CD8-positive, alpha-beta T cell (primary cell): ENCODE measurements at regions of chr1 and their contacts with region 1.

Region 1: DNA sequence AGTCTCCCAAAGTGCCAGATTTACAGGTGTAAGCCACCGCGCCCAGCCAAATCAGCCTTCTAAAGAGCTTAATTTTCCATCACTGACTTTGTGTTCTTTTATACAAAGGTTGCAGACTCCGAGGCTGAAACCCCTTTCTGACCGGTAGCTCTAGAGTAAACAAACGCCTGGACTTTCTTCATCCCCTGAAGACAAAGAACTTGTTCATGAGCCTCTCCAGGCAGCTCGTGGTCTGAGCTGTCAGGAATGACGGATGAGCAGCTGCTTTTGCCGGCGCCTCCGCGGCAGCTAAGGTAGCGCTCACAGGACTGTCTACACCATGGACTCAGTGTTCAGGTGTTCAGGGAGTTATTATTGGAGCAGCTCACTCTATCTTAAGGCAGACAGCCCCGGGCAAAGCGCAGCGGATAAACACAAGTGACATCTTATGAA is 128.5 kb upstream of the ERRFI1 start:
- DNase-seq: no peak
- ATAC-seq: no peak
- H3K4me3 ChIP-seq: no peak overlapping the region
- H3K4me3 Mint-ChIP-seq: no peak overlapping the region
- H3K27ac ChIP-seq: no peak overlapping the region
- H3K27ac Mint-ChIP-seq: no peak overlapping the region
- H3K4me1 ChIP-seq: peaks cover 44% of the 10 kb centered on the region
- H3K4me1 Mint-ChIP-seq: peaks cover 45% of the 10 kb centered on the region
- H3K27me3 ChIP-seq: no peaks in the 10 kb centered on the region
- H3K27me3 Mint-ChIP-seq: peaks cover 4% of the 10 kb centered on the region
- CTCF ChIP-seq: no peak

Region 2: GRCh38 chr1:8169364-8170058 is 14.9 kb after region 1 on chr1:
- CTCF ChIA-PET with region 1: interaction called, 13 read pairs
- POLR2A ChIA-PET with region 1: interaction called, 53 read pairs
- intact Hi-C with region 1: loop called (anchors 1 to 2 kb)
- DNase-seq: peak in 8 of 9 experiments; percentile 41 to 89 (median 67)
- ATAC-seq: peak; percentile 80
- H3K4me3 ChIP-seq: no peak overlapping the region
- H3K4me3 Mint-ChIP-seq: peak overlapping the region; percentile 71
- H3K27ac ChIP-seq: peak overlapping the region; percentile 64 to 88
- H3K27ac Mint-ChIP-seq: peak overlapping the region; percentile 98
- H3K4me1 ChIP-seq: peaks cover 33% of the 10 kb centered on the region
- H3K4me1 Mint-ChIP-seq: peaks cover 45% of the 10 kb centered on the region
- H3K27me3 ChIP-seq: no peaks in the 10 kb centered on the region
- H3K27me3 Mint-ChIP-seq: no peaks in the 10 kb centered on the region
- CTCF ChIP-seq: no peak

Region 3: DNA sequence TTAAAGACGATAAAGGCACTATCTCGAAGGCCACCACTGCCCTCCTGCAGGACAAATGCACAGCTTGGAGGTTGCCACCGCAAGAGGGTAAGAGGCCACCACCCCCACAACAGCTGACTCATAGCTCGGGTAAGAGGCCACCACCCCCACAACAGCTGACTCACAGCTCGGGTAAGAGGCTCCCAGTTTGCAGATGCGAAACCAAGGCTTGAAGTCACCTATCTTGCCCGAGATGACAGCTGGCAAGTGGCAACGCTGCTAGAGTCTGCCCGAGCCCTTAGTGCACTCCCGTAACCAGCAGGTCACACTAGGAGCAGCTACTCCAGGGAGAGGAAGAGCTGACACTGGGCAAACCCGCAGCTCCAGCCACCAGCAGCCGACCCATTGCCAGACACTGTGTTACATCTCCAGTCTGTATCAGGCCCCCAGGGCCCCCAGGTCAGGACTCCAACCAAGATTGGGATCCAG is 1121.0 kb after region 1 on chr1:
- CTCF ChIA-PET with region 1: no interaction called
- POLR2A ChIA-PET with region 1: no interaction called
- intact Hi-C with region 1: no loop called
- DNase-seq: peak in 8 of 9 experiments; percentile 21 to 79 (median 64)
- ATAC-seq: peak; percentile 78
- H3K4me3 ChIP-seq: no peak overlapping the region
- H3K4me3 Mint-ChIP-seq: no peak overlapping the region
- H3K27ac ChIP-seq: no peak overlapping the region
- H3K27ac Mint-ChIP-seq: no peak overlapping the region
- H3K4me1 ChIP-seq: peaks cover 18% of the 10 kb centered on the region
- H3K4me1 Mint-ChIP-seq: peaks cover 22% of the 10 kb centered on the region
- H3K27me3 ChIP-seq: no peaks in the 10 kb centered on the region
- H3K27me3 Mint-ChIP-seq: no peaks in the 10 kb centered on the region
- CTCF ChIP-seq: no peak